ENCODE measurements at regions of chr2 and their contacts with region 1.

Region 1: GRCh38 chr2:219509780-219510511 is 4.3 kb upstream of the ASIC4 start:
- DNase-seq: peak; percentile 82
- ATAC-seq: peak; percentile 57
- H3K4me3 Mint-ChIP-seq: peak overlapping the region; percentile 72
- H3K27ac Mint-ChIP-seq: no peak overlapping the region
- H3K4me1 Mint-ChIP-seq: peaks cover 70% of the 10 kb centered on the region
- H3K27me3 Mint-ChIP-seq: peaks cover 41% of the 10 kb centered on the region
- CTCF ChIP-seq: peak; percentile 31

Region 2: GRCh38 chr2:219388127-219388844 is 121.7 kb before region 1 on chr2:
- CTCF ChIA-PET with region 1: interaction called, 20 read pairs
- POLR2A ChIA-PET with region 1: interaction called, 3 read pairs
- DNase-seq: peak; percentile 97
- ATAC-seq: peak; percentile 76
- H3K4me3 Mint-ChIP-seq: peak overlapping the region; percentile 76
- H3K27ac Mint-ChIP-seq: no peak overlapping the region; the same call in 1 of the 2 replicates
- H3K4me1 Mint-ChIP-seq: peaks cover 7% of the 10 kb centered on the region
- H3K27me3 Mint-ChIP-seq: 0 out of 2 replicates have a peak, but pooled peaks cover 3% of the 10 kb centered on the region
- CTCF ChIP-seq: no peak

Region 3: DNA sequence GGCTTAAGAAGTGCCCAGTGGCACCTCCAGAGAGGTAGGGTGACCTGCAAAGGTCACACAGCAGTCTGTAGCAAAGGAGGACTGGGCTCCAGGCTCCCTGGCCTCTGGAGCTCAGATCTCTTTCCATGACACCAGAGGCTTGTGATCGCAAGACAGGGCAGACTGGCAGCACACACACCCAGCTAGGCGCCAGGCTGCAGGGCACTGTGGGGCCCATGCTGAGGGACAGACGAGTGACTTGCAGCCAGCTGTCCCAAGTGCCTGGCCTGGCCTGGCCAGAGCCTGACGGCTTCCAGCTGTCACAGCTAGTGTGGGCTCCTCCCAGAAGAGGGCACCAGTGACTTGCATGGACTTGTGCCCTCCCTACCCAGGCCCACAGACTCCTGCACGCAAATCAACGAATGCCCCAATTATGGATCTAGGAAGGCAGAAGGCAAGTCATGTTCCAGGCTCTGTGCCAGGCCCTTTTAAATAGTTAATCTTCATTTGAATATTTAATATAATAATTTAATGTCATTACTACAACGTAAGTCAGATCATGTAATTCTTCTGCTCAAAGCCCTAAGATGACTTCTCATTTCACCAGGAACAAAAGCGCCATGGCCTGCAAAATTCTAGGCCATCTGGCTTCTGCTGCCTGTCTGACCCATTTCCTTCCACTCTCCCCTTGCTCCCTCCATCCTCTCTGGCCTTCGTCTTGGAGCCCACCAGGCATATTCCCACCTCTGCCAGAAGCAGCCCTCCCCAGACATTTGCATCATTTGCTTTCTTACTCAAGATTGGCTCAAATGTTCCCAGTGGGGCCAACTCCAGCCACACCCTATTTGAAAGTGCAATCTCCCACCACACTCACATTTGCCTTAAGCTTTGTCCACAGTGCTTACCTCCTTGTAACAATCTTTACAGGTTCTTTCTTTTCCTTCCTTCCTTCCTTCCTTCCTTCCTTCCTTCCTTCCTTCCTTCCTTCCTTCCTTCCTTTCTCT is 79.0 kb before region 1 on chr2:
- CTCF ChIA-PET with region 1: interaction called, 20 read pairs
- POLR2A ChIA-PET with region 1: no interaction called
- DNase-seq: no peak
- ATAC-seq: peak; percentile 36
- H3K4me3 Mint-ChIP-seq: no peak overlapping the region
- H3K27ac Mint-ChIP-seq: peak overlapping the region; percentile 69; the same call in 1 of the 2 replicates
- H3K4me1 Mint-ChIP-seq: peaks cover 8% of the 10 kb centered on the region
- H3K27me3 Mint-ChIP-seq: peaks cover 20% of the 10 kb centered on the region
- CTCF ChIP-seq: no peak

Region 4: GRCh38 chr2:219459460-219460311 is 50.3 kb before region 1 on chr2:
- CTCF ChIA-PET with region 1: interaction called, 40 read pairs
- POLR2A ChIA-PET with region 1: interaction called, 3 read pairs
- DNase-seq: peak; percentile 85
- ATAC-seq: peak; percentile 65
- H3K4me3 Mint-ChIP-seq: peak overlapping the region; percentile 30; the same call in 1 of the 2 replicates
- H3K27ac Mint-ChIP-seq: no peak overlapping the region; the same call in 1 of the 2 replicates
- H3K4me1 Mint-ChIP-seq: peaks cover 31% of the 10 kb centered on the region
- H3K27me3 Mint-ChIP-seq: no peaks in the 10 kb centered on the region
- CTCF ChIP-seq: peak; percentile 94

Region 5: GRCh38 chr2:219521066-219521880 is 11.3 kb after region 1 on chr2:
- CTCF ChIA-PET with region 1: interaction called, 188 read pairs
- POLR2A ChIA-PET with region 1: interaction called, 9 read pairs
- DNase-seq: peak; percentile 80
- ATAC-seq: peak; percentile 68
- H3K4me3 Mint-ChIP-seq: peak overlapping the region; percentile 64
- H3K27ac Mint-ChIP-seq: peak overlapping the region; percentile 58
- H3K4me1 Mint-ChIP-seq: peaks cover 64% of the 10 kb centered on the region
- H3K27me3 Mint-ChIP-seq: peaks cover 32% of the 10 kb centered on the region
- CTCF ChIP-seq: peak; percentile 49; the same call in 1 of the 2 replicates

Region 6: GRCh38 chr2:219537657-219538488 is 27.9 kb after region 1 on chr2:
- CTCF ChIA-PET with region 1: interaction called, 133 read pairs
- POLR2A ChIA-PET with region 1: no interaction called
- DNase-seq: peak; percentile 51
- ATAC-seq: peak; percentile 38
- H3K4me3 Mint-ChIP-seq: no peak overlapping the region
- H3K27ac Mint-ChIP-seq: no peak overlapping the region
- H3K4me1 Mint-ChIP-seq: peaks cover 27% of the 10 kb centered on the region
- H3K27me3 Mint-ChIP-seq: no peaks in the 10 kb centered on the region; the same call in none of the 2 replicates
- CTCF ChIP-seq: no peak

Region 7: DNA sequence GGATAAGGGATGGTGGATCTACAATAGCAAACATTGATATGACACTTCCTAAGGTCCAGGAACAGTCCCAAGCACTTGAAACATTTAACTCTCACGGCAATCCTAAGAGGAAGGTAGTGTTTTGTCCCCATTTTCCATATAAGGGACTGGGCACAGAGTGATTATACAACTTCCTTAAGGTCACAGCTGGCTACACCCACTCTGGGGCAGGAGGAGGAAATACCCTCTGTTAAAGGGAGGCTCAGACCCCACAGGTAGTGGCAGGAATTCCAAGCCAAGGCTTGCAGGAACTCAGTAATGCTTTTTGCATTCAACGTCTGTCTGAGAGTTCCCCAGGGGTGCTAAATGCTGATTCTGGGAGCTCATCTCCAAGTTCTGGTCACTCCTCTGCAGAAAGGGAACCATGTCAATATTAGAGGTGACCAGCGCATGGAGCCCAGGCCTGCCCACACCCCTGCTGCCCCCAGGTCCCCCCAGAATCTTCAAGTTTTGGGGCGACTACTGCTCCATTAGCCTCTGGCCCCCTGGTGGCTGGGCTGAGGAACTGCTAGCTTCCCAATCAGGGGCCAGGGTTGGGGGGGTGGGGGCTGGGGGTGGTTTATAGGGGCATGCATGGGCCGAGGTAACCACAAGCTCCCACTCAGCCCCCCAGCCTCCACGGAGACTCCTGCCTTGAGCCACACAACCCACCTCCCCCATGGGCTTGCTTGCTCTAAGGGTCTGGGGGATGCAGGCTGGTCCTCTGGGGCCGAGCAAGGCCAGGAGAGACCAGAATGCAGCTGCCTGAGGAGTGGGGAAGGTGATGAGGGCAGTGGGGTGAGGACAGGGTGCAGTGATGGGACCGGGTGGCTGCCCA is 50.3 kb after region 1 on chr2:
- CTCF ChIA-PET with region 1: interaction called, 19 read pairs
- POLR2A ChIA-PET with region 1: no interaction called
- DNase-seq: no peak
- ATAC-seq: peak; percentile 4
- H3K4me3 Mint-ChIP-seq: no peak overlapping the region
- H3K27ac Mint-ChIP-seq: peak overlapping the region; percentile 84
- H3K4me1 Mint-ChIP-seq: peaks cover 56% of the 10 kb centered on the region
- H3K27me3 Mint-ChIP-seq: peaks cover 4% of the 10 kb centered on the region; the same call in 1 of the 2 replicates
- CTCF ChIP-seq: peak; percentile 91

Region 8: DNA sequence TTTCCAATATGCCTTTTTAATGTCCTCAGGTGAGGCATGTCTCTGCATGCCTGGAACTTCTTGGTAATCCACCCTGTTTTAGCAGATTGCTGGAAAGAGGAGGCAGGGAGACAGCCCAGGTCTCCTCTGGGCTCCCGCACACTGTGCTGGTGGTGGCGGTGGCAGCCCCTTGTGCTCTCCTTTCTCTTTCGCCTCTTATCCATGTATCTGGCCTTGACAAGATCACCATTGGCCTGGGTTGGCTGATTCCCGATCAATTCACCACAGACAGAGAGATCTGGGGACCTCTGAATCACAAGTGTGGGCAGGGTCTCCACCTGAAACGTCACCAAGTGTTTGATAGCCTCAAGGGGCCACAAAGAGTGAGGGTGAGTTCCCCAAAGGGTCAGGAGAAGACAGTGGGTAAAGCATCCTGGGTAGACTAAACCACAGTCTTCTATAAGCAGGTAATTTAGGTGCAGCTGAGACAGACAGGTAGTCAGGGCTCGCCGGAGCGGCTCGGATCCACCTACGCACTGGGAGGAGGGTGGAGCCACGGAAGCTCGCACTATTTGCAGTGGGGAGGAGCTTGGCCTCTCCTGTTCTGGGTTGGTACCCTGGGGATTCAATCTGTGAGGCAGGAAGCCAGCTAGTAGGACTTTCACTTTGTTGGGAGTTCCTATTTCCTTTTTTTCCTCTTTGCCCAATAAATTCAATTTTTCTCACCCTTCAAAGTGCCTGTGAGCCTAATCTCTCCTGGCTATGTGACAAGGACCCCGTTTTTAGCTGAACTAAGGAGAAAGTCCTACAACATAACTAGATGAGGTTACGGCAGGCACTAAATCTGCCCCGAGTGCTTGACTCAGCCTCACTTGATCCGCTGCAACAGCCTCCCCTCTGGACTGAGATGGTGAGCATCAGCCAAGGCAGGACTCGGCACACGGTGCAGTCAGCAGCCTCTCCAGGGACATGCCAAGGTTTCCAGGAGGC is 175.1 kb after region 1 on chr2:
- CTCF ChIA-PET with region 1: no interaction called
- POLR2A ChIA-PET with region 1: no interaction called
- DNase-seq: peak; percentile 74
- ATAC-seq: peak; percentile 95
- H3K4me3 Mint-ChIP-seq: peak overlapping the region; percentile 51
- H3K27ac Mint-ChIP-seq: peak overlapping the region; percentile 97
- H3K4me1 Mint-ChIP-seq: peaks cover 50% of the 10 kb centered on the region
- H3K27me3 Mint-ChIP-seq: peaks cover 12% of the 10 kb centered on the region
- CTCF ChIP-seq: no peak

Region 9: DNA sequence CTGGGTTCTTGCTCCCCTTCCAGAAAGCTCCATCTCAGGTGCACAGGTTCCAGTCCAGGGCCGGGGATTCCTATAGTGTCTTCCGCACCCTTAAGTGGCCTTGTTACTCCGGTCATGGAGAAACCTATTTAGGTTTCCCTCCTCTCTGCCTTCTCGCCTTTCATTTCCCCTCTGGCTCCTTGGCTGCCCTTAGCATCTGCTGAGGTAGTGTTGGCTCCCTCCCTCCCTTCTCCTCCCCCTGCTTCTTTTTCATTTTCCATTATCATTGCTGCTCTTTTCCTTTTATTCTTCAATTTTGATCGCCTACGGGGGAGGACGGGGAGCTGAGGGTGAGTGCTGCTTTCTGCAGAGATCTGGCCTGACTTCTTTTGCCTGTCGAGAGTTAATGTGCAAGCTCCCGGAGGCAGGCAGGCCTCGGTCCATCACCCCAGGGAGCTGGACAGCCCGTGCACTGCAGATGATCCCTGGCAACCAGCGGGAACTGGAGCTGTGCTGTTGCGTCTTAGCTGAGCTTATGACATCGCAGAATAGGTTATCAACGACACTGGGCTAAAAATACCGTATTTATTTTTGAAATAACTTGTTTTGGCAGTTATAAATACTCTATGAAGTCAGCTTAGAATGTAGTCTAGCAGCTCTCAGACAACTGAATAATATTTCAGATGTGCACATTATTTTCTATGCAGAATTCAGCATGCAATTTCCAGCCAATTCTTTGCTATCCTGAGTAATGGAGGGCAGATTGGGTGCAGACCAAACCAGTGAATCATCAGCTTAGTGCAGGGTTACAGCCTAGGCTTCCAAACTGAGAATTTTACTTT is 259.4 kb after region 1 on chr2:
- CTCF ChIA-PET with region 1: no interaction called
- POLR2A ChIA-PET with region 1: no interaction called
- DNase-seq: no peak
- ATAC-seq: no peak
- H3K4me3 Mint-ChIP-seq: no peak overlapping the region
- H3K27ac Mint-ChIP-seq: no peak overlapping the region
- H3K4me1 Mint-ChIP-seq: no peaks in the 10 kb centered on the region
- H3K27me3 Mint-ChIP-seq: peaks cover 3% of the 10 kb centered on the region
- CTCF ChIP-seq: no peak

Measured in WTC11 (cell line).